ENCODE measurements at regions of chr11 and their contacts with region 1.

Region 1: DNA sequence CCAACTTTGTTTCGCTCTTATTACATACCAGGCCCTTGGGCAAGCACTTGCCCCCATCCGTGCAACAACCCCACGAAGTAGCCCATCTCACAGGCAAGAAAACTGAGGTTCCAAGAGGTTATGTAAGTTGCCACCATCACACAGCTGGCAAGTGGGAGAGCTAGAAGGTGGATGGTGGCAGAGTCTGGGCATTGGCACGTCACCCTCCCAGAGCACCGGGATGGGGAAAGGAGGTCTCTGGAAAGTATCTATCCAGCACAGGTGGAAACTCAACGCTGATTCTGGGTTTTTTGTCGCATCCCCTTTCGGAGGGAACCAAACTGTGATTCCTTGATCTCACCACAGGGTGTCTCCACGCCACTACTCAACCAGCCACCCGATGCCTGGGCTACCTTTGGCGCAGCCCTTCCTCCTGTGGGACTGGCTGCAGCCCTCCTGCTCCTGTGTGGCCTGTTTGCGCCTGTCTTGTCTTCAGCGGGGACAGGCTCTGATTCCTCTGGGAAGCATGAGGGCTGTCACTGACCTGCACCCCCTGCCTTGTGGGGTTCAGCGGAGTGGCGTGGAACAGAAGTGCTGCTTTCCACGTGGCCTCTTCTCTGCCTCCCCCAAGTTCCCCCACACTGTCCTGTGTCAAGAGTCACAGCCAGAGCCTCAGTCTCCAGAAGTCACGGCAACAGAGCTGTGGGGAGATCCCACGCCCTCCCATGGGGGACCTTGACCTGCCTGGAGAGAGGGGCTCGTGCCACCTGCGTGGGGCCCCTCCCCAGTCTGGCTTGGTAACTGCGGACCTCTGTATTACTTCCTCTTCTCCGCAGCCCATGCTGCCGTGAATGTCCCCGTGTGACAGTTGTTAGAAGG is 34.4 kb upstream of the TRIM29 start:
- DNase-seq: no peak
- H3K4me3 ChIP-seq: no peak overlapping the region
- H3K27me3 ChIP-seq: peaks cover 22% of the 10 kb centered on the region
- CTCF ChIP-seq: peak; percentile 80

Region 2: DNA sequence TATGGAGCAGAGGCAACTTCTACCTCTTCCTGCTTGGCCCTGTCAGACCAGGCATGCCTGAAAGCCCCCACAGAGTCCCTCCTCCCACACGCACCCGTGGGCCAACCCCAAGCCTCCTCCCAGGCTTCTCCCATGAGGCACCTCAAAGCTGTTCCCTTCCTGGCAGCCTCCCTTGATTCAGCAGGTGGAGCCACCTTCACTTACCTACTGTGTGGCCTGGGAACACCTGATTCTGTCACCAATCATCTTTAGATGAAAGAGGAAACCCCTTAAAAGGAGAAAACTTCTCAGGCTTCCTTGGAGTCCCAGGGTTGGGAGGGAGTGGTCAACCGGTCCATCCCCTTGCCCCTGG is 30.2 kb before region 1 on chr11:
- CTCF ChIA-PET with region 1: interaction called, 11 read pairs
- POLR2A ChIA-PET with region 1: no interaction called
- DNase-seq: no peak
- H3K4me3 ChIP-seq: no peak overlapping the region
- H3K27me3 ChIP-seq: peaks cover 20% of the 10 kb centered on the region
- CTCF ChIP-seq: no peak

Region 3: DNA sequence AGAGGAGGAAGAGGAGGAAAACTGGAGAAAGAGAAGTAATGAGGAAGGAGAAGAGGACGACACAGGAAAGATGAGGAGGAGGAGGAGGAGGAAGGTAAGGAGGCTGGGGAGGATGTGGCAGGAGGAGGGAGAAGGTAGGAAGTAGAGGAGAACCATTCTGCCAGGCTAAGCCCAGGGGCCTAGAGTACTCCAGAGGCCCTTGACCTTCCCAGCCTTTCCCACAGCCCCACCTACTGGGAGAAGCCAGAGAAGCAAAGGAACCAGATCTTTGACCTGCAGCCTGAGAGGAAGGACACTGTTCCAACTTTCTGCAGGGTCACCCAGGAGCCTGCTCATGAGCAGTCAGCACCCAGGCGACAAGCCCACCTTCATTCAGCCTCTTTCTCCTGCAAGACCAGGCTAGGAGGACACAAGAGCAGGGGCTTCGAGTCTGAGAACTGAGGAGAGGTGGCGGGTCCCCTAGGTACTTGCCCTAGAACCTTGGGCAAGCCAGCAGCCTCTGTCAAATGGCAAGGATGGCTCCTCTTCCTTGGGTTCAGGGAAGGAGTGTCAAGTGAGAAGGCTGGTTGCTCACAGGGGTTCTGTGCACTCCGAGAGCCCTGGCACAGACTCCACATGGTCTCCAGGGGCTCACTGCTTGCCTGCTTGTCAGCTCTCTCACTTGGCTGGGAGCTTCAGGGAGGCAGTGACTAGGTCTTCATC is 10.7 kb after region 1 on chr11:
- CTCF ChIA-PET with region 1: interaction called, 63 read pairs
- POLR2A ChIA-PET with region 1: no interaction called
- DNase-seq: no peak
- H3K4me3 ChIP-seq: no peak overlapping the region
- H3K27me3 ChIP-seq: peaks cover 2% of the 10 kb centered on the region
- CTCF ChIP-seq: peak; percentile 44; the same call in 1 of the 2 replicates

Region 4: DNA sequence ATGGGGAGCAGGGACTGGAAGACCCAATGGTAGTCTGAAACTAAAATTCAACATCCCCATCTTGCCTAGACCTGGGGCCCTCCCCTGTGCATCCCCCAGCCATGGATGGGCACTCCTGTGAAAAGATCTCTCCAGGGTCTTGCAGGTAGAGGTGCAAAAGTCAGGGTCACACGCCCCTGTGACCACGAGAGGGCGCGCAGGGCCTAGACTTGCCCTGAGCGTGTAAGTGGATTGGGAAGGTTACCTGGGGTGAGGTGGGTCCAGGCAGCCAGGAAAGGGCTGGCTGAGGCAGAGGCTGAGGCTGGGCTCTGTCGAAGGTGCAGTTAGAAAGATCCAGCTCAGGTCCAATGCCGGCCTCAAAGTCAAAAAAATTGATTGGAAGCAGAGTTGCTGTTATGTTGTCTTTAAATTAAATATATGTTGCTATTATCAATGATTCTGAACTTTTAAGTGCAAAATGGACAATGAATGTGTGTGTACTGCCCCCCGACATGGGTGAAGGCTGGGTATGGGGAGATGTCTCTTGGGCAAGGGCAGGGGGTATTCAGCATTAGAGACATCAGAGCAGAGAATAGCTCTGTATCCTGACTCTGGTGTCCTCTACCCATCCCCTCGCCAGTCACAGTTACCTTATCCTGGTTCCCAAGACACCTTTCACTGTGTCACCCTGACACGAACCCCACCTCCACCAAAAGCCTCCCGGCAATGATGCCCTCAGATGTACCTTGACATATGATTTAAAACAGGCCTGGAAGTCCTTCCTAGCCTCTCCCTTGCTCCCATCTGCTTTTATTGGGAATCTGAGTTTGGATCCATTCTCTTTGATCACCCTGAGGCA is 63.0 kb after region 1 on chr11:
- CTCF ChIA-PET with region 1: interaction called, 250 read pairs
- POLR2A ChIA-PET with region 1: no interaction called
- DNase-seq: no peak
- H3K4me3 ChIP-seq: no peak overlapping the region
- H3K27me3 ChIP-seq: peaks cover 36% of the 10 kb centered on the region
- CTCF ChIP-seq: peak; percentile 80

Region 5: DNA sequence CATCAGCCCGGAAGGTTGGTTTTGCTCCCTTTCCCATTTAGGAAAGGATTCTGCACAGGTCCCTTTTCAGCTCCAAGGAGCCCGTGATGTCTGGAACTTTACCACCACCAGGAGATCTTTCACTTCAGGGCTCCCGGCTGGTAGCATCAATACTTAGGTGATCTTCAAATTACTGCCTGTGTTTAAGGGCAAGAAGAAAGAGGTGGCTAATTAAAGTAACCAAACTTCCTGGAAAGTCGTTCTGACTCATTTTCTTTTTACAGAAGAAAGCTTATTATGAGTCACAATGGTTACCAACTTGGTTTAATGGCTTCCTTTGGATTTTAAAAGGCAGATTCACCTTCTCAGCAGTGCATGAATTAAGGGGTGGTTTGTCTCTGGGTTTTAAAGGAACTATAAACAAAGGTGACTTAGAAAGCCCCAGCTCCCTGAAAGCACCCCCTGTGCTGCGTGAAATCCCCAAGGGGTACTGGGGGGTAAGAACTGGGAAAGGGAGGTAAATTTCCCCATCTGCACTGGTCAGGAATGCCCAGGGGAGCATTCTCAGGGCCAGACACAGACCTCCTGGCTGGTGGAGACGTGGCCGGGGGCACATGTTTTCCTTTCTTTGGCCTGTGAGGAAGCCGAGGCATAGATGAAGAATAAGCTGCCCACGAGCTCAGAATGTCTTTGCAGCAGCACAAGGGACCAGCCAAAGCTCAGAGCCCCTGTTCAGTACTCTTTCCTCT is 76.4 kb after region 1 on chr11:
- CTCF ChIA-PET with region 1: interaction called, 25 read pairs
- POLR2A ChIA-PET with region 1: no interaction called
- DNase-seq: no peak
- H3K4me3 ChIP-seq: no peak overlapping the region
- H3K27me3 ChIP-seq: peaks cover 27% of the 10 kb centered on the region
- CTCF ChIP-seq: no peak

Region 6: DNA sequence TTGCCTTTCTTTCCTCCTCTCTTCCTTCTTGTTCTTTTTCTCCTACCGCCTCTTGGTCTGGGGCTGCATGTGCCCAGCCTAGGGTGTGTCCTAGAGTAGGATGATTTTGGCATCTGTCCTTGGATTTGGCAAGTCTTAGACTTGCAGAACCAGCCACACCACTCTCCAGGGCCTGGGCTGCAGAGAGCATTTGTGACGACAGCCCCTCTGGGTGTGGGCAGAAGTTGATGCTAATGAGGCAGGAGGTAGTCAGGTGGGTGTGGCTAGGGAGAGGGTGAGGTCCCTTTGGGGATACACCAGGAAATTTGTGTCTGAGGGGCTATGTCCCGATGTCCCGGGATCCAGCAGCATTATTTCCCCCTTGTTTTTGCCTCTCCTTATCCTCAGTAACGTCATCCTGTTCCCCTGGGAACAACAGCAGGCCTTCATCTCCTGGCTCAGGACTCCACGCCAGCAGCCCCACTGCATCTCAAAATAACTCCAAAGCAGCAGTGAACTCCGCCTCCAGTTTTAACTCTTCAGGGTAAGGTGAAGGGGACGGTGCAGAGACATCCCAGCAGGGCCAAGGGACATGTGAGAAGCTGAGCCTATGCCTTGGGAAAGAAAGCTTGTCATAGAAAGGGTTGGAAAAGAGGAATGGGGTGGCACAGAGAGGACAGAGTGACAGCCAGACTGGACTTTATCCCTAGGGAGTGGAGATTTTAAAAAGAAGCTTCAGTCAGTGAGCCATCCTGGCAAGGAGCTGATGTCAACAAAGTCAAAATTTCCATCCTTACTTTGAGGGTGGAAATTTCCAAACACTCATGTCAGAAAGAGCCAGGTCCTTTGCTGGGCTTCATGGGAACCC is 144.8 kb after region 1 on chr11:
- CTCF ChIA-PET with region 1: no interaction called
- POLR2A ChIA-PET with region 1: no interaction called
- DNase-seq: no peak
- H3K4me3 ChIP-seq: no peak overlapping the region
- H3K27me3 ChIP-seq: peaks cover 10% of the 10 kb centered on the region
- CTCF ChIP-seq: no peak

Region 7: DNA sequence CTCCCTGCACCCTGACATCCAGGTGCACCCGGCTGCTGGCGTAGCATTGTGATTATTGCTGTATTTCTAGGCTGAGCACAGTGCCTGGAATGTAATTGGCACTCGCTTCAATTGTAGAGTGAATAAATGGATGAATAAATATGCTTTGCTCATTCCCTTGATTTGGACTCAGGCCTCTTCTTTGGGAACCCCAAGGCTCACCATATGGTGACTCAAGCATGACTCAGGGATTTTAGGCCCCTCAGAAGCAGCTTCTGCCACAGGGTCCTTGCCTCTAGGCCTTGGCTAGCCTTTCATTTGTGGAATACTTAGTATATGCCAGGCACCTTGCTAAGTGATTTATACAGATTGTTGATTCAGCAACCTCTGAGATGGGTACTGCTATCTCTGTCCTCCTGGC is 418.2 kb after region 1 on chr11:
- CTCF ChIA-PET with region 1: no interaction called
- POLR2A ChIA-PET with region 1: no interaction called
- DNase-seq: no peak
- H3K4me3 ChIP-seq: no peak overlapping the region
- H3K27me3 ChIP-seq: no peaks in the 10 kb centered on the region; the same call in none of the 2 replicates
- CTCF ChIP-seq: no peak